BJ (cell line): ENCODE measurements at regions of chr5 and their contacts with region 1.

Region 1: DNA sequence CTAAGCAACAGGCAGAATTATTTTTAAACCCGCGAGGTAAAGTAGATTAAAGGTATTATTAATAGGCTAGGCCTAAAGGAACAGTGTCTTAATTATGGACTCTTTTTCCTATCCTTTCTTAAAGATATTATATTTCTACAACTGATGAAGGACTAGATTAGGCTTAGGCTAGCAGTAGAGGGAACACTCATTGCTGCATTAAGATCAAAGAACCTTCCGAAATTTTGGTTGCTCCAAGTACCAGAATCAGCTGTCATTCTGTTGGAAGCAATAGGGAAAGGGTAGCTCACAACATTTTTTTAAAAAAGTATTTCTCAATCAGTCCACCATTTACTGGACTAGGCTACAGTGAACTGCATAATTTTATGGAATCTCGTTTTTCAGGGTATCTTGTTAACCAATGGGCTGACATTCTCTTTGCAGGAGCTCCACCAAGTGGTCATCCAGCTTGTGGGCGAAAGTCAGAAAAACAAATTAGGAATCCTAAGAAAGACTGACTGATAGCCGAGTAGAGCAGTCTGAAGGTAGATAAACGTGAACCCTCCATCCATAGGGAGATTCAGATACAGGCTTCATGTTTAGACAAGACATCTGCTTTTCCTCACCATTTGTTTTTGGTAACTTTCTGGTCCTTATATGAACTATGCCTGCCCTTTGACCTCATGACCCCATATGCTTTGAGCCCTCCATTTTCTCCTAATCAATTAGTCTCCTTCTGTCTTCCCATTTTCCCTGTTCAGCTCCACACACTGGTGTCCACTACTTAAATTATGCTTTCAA is 103.6 kb upstream of the CHD1 start:
- DNase-seq: peak; percentile 36
- H3K4me3 ChIP-seq: no peak overlapping the region
- H3K27me3 ChIP-seq: no peaks in the 10 kb centered on the region
- CTCF ChIP-seq: peak; percentile 83

Region 2: GRCh38 chr5:98905857-98906690 is 126.3 kb before region 1 on chr5:
- CTCF ChIA-PET with region 1: interaction called, 45 read pairs
- POLR2A ChIA-PET with region 1: no interaction called
- DNase-seq: no peak
- H3K4me3 ChIP-seq: no peak overlapping the region
- H3K27me3 ChIP-seq: no peaks in the 10 kb centered on the region
- CTCF ChIP-seq: peak; percentile 55

Region 3: DNA sequence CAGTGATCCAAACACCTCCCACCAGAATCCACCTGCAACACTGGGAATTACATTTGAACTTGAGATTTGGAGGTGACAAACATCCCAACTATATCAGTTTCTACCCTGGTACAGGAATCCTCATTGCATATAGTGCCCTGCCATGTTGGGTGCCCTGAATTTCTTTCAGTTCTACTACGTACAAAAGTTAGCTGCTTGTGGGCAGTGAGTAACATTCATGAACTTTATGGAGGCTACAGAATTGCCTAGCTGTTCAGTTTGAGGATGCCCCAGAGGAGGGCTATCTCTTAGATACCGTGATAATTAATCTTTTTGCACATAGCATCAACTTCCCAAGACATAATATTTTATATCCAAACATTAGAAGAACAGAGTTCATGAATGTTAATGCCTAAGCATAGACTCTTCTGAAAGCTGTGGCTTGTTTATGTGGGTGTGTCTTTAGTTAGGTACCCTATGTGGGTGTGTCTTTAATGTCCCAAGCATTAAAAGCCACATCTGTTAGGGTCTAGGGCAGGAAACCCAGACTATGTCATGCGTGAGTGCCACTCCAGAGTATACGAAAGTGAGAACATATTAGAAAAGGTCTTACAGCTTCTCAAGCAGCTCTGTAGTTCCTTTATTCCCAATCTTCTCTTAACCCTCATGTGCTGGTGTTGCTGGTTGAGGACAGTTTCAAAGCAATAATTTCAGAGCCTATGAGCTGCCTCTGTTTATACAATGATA is 56.6 kb before region 1 on chr5:
- CTCF ChIA-PET with region 1: no interaction called
- POLR2A ChIA-PET with region 1: interaction called, 12 read pairs
- DNase-seq: no peak
- H3K4me3 ChIP-seq: no peak overlapping the region
- H3K27me3 ChIP-seq: no peaks in the 10 kb centered on the region
- CTCF ChIP-seq: no peak